Activated CD4-positive, alpha-beta memory T cell treated with anti-CD3 and anti-CD28 coated beads for 36 hours (primary cell): ENCODE measurements at regions of chr2 and their contacts with region 1.

Region 1: DNA sequence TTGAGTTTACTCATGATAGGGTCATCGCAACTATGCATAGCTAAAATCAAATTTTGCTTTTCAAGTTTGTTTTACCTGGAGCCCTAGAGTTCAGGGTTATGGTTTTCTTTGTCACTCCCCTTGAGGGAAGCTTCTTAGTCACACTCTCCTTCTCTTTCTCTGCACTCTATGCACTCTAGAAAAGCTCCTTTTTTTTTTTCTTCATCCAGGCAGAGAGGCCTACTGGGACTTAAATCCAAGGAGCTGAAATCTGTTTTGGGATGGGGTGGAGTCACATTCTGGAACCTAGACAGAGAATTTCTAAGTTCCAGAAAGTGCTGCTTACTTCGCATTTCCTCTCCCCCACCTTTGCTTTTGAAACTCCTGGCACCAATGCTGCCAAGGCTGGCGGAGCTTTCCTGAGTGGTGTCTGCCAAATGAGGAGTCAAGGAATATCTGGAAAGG is 19.1 kb upstream of the IL18R1 start:
- DNase-seq: no peak
- H3K4me3 Mint-ChIP-seq: no peak overlapping the region
- H3K27ac Mint-ChIP-seq: no peak overlapping the region
- H3K4me1 Mint-ChIP-seq: peaks cover 7% of the 10 kb centered on the region
- H3K27me3 Mint-ChIP-seq: peaks cover 2% of the 10 kb centered on the region

Region 2: GRCh38 chr2:102268510-102269209 is 67.9 kb before region 1 on chr2:
- CTCF ChIA-PET with region 1: no interaction called
- POLR2A ChIA-PET with region 1: no interaction called
- intact Hi-C with region 1: no loop called
- DNase-seq: no peak
- H3K4me3 Mint-ChIP-seq: no peak overlapping the region
- H3K27ac Mint-ChIP-seq: no peak overlapping the region
- H3K4me1 Mint-ChIP-seq: peaks cover 27% of the 10 kb centered on the region
- H3K27me3 Mint-ChIP-seq: peaks cover 5% of the 10 kb centered on the region

Region 3: DNA sequence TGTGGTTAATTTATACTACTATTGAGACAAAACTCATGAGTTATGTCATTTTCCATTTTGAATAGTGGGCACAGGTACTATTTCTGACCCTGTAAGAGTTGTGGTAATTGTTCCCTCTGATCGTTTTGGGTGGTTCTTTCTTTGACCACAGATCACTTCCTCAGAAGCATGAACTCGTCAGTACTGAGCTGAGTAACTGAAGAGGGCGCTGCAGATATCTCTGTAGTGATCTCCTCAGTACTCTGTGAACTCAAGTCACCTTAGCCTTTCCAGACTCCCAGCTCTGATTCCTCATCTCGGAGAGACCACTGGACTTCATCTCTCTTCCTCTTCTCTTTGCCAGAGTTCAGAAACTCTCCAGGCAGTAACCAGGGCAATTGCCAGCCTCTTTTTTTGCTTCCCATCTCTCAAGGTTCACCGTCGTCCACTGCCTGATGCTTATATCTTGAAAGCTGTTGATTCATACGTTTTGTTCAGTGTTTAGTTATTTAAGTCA is 34.6 kb before region 1 on chr2:
- CTCF ChIA-PET with region 1: interaction called, 3 read pairs
- POLR2A ChIA-PET with region 1: interaction called, 4 read pairs
- intact Hi-C with region 1: loop called (anchors 1 kb)
- DNase-seq: peak; percentile 65
- H3K4me3 Mint-ChIP-seq: peak overlapping the region; percentile 4
- H3K27ac Mint-ChIP-seq: peak overlapping the region; percentile 55
- H3K4me1 Mint-ChIP-seq: peaks cover 45% of the 10 kb centered on the region
- H3K27me3 Mint-ChIP-seq: peaks cover 4% of the 10 kb centered on the region

Region 4: GRCh38 chr2:102350137-102350793 is 13.7 kb after region 1 on chr2:
- CTCF ChIA-PET with region 1: no interaction called
- POLR2A ChIA-PET with region 1: no interaction called
- intact Hi-C with region 1: loop called (anchors 2 kb)
- DNase-seq: no peak
- H3K4me3 Mint-ChIP-seq: no peak overlapping the region
- H3K27ac Mint-ChIP-seq: no peak overlapping the region
- H3K4me1 Mint-ChIP-seq: peaks cover 3% of the 10 kb centered on the region
- H3K27me3 Mint-ChIP-seq: peaks cover 2% of the 10 kb centered on the region